Kidney (tissue), 22 donors: ENCODE measurements at regions of chr1 and their contacts with region 1.

Region 1: GRCh38 chr1:183234660-183235476 is 48.8 kb downstream of the LAMC2 start:
- DNase-seq: peak; percentile 73 to 90 (median 77)
- H3K4me3 ChIP-seq: peak overlapping the region; percentile 40 to 65 (median 44)
- H3K27ac ChIP-seq: peak overlapping the region; percentile 5 to 57
- H3K4me1 ChIP-seq: peaks cover 0 to 6% (median 0%) of the 10 kb centered on the region in 3 donors
- H3K27me3 ChIP-seq: no peaks in the 10 kb centered on the region
- CTCF ChIP-seq: peak; percentile 43

Region 2: DNA sequence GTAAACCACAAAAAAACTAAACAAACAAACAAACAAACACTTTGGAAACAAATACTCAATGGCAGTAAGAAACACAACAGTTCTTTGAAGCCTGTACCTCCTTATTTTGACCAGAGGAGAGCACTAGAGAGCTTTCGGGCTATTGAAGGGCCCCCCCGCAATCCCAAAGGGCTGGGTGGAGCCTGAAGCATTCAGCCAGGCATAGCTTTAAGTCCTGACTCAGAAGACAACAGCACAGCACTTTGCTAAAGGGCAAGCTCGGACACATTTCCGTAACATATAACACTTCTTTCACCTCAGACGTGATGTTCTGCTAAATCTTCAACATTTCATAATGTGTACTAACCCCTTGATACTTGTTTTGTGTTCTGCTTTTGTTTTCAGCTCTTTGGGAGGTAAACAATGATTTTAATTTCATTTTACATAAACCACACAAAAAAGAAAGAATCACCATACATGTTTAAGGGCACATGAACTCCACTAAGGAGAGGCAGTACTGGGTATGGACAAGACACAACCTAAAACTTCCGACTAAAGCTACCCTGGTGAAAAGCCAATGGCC is 272.2 kb before region 1 on chr1:
- intact Hi-C with region 1: loop called (anchors 10 kb)
- DNase-seq: peak; percentile 76 to 91 (median 85)
- H3K4me3 ChIP-seq: peak overlapping the region; percentile 50 to 59 (median 53)
- H3K27ac ChIP-seq: peak overlapping the region in 1 of 2 donors; percentile 19
- H3K4me1 ChIP-seq: peaks cover 0 to 5% (median 0%) of the 10 kb centered on the region in 3 donors
- H3K27me3 ChIP-seq: no peaks in the 10 kb centered on the region
- CTCF ChIP-seq: peak; percentile 88

Region 3: GRCh38 chr1:183148599-183148998 is 86.3 kb before region 1 on chr1:
- intact Hi-C with region 1: no loop called
- DNase-seq: no peak
- H3K4me3 ChIP-seq: no peak overlapping the region
- H3K27ac ChIP-seq: no peak overlapping the region
- H3K4me1 ChIP-seq: no peaks in the 10 kb centered on the region
- H3K27me3 ChIP-seq: no peaks in the 10 kb centered on the region
- CTCF ChIP-seq: no peak